ENCODE measurements at regions of chr11 and their contacts with region 1.

Region 1: DNA sequence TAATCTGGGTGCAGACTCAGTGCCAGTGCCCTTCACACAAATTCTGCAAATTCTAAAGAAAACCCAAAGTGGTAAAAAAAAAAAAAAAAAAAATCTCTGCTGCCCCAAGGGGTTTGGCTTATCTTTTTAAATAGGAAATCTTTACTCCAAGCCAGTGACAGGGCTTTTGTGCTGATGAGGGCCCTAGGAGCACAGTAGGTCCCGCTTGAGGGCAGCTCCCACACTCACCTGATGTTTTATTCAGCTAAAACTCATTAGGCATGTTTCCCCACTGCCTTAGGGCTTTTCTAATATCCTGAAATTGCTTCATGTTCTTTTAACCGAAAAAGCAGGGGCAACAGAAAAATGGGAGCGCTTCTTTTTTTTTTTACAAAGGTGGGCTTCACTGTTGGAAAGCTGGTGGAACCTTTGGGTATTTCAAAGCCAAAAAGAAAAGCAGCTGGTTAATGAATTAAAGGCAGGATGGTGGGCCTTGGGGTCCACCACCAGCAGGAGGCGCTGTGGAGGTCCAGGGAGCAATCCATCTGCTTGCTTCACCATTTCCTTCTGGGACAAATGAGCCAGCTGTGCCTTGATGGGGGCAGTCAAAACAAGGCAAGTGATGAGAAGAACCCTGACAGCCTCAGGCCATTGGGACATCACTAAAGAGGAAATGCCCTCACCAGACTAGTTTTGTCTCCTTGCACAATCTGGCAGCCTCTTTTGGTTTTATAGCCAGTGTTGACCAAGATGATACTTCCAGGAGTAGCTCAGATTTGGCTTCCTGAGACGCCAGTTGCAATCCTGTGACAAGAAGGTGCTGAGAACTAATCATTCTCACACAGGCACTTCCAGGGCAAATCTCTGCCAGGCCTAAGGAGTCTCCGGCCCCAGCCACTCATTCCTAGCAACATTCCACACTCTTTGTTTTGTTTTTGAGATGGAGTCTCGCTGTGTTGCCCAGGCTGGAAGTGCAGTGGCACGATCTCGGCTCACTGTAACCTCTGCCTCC is 38.4 kb upstream of the WEE1 start:
- DNase-seq: peak; percentile 78
- CTCF ChIP-seq: peak; percentile 79

Region 2: GRCh38 chr11:9489080-9489765 is 45.9 kb before region 1 on chr11:
- CTCF ChIA-PET with region 1: interaction called, 10 read pairs
- POLR2A ChIA-PET with region 1: no interaction called
- DNase-seq: no peak
- CTCF ChIP-seq: no peak

Region 3: GRCh38 chr11:9516113-9516512 is 19.0 kb before region 1 on chr11:
- CTCF ChIA-PET with region 1: interaction called, 13 read pairs
- POLR2A ChIA-PET with region 1: no interaction called
- DNase-seq: no peak
- CTCF ChIP-seq: no peak

Region 4: GRCh38 chr11:9550191-9550628 is 15.1 kb after region 1 on chr11:
- CTCF ChIA-PET with region 1: interaction called, 13 read pairs
- POLR2A ChIA-PET with region 1: no interaction called
- DNase-seq: no peak
- CTCF ChIP-seq: no peak

Region 5: DNA sequence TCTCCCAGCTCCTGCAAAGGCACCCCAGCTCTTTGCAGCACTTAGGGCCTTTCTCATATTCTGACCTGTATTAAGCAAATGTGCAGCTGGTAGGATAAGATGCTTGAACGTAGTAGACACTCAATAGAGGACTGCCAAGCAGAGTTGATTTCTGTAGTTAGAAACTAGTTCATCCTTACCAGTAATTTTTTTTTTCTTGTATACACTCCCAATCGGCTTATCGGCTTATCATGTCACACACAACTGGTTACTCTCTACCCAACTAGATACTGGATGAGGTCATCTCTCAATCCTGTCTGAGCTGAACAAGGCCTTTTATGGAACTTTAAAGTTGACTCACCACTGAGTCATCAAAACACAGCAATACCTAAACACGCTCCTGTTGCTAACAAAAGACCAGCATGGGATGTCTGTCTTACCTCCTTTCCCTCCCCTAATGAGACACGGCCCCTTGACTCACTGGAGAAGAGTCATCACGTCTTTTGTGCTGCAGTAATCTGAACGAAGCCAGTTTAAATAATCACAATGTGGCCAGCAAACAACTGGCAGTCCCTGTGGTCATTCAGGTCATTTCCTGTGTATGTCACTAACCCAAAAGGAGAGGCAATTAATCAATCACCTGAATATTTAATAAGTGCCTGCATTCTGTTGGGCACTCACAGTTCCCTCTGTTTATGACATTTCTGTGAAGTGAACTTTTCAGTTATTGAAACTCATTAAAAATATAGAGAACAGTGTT is 30.9 kb after region 1 on chr11:
- CTCF ChIA-PET with region 1: interaction called, 54 read pairs
- POLR2A ChIA-PET with region 1: no interaction called
- DNase-seq: peak; percentile 72
- CTCF ChIP-seq: no peak

Region 6: GRCh38 chr11:9573052-9573774 is 38.1 kb after region 1 on chr11 and contains the start of gene WEE1:
- CTCF ChIA-PET with region 1: interaction called, 10 read pairs
- POLR2A ChIA-PET with region 1: interaction called, 3 read pairs
- DNase-seq: peak; percentile 98
- CTCF ChIP-seq: no peak

Region 7: DNA sequence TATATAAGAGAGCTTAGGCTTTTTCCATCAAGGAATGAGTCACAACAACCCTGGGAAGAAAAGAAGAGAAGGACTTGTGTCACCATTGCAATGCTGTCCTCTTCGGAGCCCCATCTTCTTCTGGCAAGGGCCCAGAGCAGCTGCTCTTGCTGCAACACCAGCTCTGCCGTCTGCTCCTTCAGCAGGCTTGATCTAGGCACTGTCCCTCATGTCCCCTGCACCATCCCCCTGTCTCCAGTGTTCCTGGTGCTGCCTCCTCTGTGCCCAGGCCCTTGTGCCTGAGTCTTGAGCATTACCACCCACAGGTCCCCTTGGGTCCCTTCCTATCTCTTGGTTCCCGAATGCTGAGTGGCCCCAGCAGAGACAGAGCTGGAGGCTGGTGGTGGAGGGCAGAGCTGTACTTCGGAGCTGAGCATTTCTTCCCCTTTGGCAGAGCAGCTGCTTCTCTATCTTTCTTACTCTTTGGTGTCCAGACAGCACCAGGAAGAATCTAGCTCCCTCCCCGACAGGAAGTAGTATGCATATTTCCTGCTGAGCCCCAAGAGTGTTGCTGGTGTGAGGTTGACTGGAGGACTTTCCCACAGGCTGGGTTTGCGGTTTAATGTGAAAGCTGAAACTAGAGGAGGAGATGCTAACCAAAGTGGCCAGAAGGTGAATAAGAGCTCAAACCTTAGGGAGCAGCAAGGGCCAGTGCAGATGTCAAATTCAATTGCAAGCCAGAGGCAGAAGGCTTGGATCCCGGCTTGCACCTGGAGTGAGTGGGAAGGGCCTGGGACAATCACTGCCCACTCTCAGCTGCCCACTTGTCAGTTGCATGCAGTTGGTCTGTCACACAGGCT is 66.2 kb after region 1 on chr11:
- CTCF ChIA-PET with region 1: interaction called, 13 read pairs
- POLR2A ChIA-PET with region 1: no interaction called
- DNase-seq: peak; percentile 73
- CTCF ChIP-seq: no peak

Measured in GM10248 (cell line).